ENCODE measurements at regions of chr3 and their contacts with region 1.

Region 1: DNA sequence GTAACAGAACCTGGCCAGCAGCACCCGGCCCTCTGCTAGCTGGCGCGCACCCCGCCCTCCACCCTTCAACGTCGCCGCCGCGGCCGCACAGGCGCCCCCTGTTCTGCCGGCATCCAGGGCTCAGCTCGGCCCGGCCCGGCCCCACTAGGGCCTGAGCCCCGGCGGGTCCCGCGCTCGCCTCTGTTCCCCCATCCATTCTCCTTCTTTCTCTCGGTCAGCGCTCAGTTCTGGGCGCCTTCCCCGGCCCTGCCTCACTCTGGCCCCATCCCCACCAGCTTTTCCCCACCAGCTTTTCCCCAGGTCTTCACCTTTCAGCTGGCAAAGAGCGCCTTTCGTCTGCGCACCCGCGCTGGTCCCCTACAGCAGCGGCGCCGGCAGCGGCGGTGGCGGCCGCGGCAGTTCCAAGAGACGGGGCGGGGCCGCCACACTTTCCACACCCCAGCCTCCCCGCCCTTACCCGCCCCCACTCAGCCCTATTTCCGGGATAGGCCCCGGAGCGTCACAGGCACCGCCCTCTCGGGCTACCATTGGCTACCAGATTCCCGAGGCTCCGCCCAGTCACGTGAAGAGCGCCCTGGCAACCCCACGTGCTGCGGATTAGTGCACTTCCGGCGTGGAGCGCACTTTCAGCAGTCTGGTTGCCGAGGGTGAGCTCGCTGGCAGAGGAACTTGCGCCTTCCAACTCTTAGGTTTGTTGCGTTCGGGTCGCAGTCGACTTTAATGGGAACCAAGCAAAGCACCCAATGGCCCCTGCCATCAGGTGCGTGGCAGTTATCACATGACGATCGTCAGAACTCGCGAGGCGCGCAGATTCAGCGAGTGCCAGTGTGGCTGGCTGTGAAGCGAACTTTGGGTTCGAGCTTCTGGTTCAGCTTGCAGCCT is at the start of gene EIF5A2:
- DNase-seq: peak; percentile 89 to 98 (median 95)
- ATAC-seq: peak; percentile 96
- H3K4me3 ChIP-seq: peak within 1 kb of the TSS; percentile 66 to 68
- H3K4me3 Mint-ChIP-seq: peak within 1 kb of the TSS; percentile 95
- H3K27ac ChIP-seq: peak within 1 kb of the TSS; percentile 67 to 79
- H3K27ac Mint-ChIP-seq: peak within 1 kb of the TSS; percentile 97
- H3K4me1 ChIP-seq: peaks cover 12% of the 10 kb centered on the region
- H3K4me1 Mint-ChIP-seq: peaks cover 20% of the 10 kb centered on the region
- H3K27me3 ChIP-seq: no peaks in the 10 kb centered on the region
- H3K27me3 Mint-ChIP-seq: no peaks in the 10 kb centered on the region
- CTCF ChIP-seq: no peak
- total RNA-seq, gene EIF5A2: 10.6 to 12.7 TPM

Region 2: GRCh38 chr3:170357176-170357919 is 551.1 kb before region 1 on chr3 and contains the start of gene SKIL:
- CTCF ChIA-PET with region 1: no interaction called
- POLR2A ChIA-PET with region 1: no interaction called
- intact Hi-C with region 1: loop called in 1 of 2 experiments (anchors 10 kb)
- DNase-seq: peak; percentile 94 to 99 (median 97)
- ATAC-seq: peak; percentile 69
- H3K4me3 ChIP-seq: peak within 1 kb of the TSS; percentile 55 to 76
- H3K4me3 Mint-ChIP-seq: peak within 1 kb of the TSS; percentile 95
- H3K27ac ChIP-seq: peak within 1 kb of the TSS; percentile 91 to 96
- H3K27ac Mint-ChIP-seq: peak within 1 kb of the TSS; percentile 99
- H3K4me1 ChIP-seq: peaks cover 24% of the 10 kb centered on the region
- H3K4me1 Mint-ChIP-seq: peaks cover 52% of the 10 kb centered on the region
- H3K27me3 ChIP-seq: no peaks in the 10 kb centered on the region
- H3K27me3 Mint-ChIP-seq: no peaks in the 10 kb centered on the region
- CTCF ChIP-seq: no peak
- total RNA-seq, gene SKIL: 160 to 177 TPM

Region 3: GRCh38 chr3:170869645-170870593 is 38.6 kb before region 1 on chr3 and contains the start of gene RPL22L1:
- CTCF ChIA-PET with region 1: interaction called, 7 read pairs
- POLR2A ChIA-PET with region 1: interaction called, 37 read pairs
- intact Hi-C with region 1: loop called (anchors 1 kb)
- DNase-seq: peak; percentile 85 to 97 (median 93)
- ATAC-seq: peak; percentile 93
- H3K4me3 ChIP-seq: peak within 1 kb of the TSS; percentile 73 to 77
- H3K4me3 Mint-ChIP-seq: peak within 1 kb of the TSS; percentile 94
- H3K27ac ChIP-seq: peak within 1 kb of the TSS; percentile 84 to 94
- H3K27ac Mint-ChIP-seq: peak within 1 kb of the TSS; percentile 97
- H3K4me1 ChIP-seq: peaks cover 27% of the 10 kb centered on the region
- H3K4me1 Mint-ChIP-seq: peaks cover 28% of the 10 kb centered on the region
- H3K27me3 ChIP-seq: no peaks in the 10 kb centered on the region
- H3K27me3 Mint-ChIP-seq: no peaks in the 10 kb centered on the region
- CTCF ChIP-seq: no peak
- total RNA-seq, gene RPL22L1: 54.3 to 56.8 TPM

Region 4: GRCh38 chr3:171028025-171028778 is 119.7 kb after region 1 on chr3:
- CTCF ChIA-PET with region 1: no interaction called
- POLR2A ChIA-PET with region 1: no interaction called
- intact Hi-C with region 1: loop called in 1 of 2 experiments (anchors 1 kb)
- DNase-seq: peak in 5 of 9 experiments; percentile 5 to 49 (median 23)
- ATAC-seq: peak; percentile 40
- H3K4me3 ChIP-seq: peak overlapping the region; percentile 10 to 39
- H3K4me3 Mint-ChIP-seq: no peak overlapping the region
- H3K27ac ChIP-seq: no peak overlapping the region
- H3K27ac Mint-ChIP-seq: no peak overlapping the region
- H3K4me1 ChIP-seq: no peaks in the 10 kb centered on the region
- H3K4me1 Mint-ChIP-seq: no peaks in the 10 kb centered on the region
- H3K27me3 ChIP-seq: peaks cover 0 to 2% of the 10 kb centered on the region in 2 experiments
- H3K27me3 Mint-ChIP-seq: peaks cover 15% of the 10 kb centered on the region
- CTCF ChIP-seq: no peak

Region 5: DNA sequence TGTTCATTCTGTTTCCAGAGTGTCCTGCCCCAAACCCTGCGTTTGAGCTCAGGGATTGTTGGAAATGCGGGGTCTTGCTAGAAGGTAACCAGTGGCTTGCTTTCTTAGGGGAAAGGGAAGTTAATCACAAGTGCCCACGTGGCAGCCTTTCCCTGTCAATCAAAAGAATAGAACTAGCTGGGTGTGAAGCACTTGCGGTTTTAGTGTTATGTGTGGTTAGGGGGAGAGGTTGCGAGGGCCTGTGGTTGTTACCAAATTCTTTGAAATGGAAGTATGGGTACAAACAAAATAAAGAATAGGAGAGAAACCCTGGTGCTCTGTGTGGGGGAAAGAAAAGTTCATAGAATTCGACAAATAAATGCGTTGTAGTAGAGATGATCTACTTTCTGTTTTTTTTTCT is 1198.5 kb after region 1 on chr3:
- CTCF ChIA-PET with region 1: no interaction called
- POLR2A ChIA-PET with region 1: no interaction called
- intact Hi-C with region 1: loop called in 1 of 2 experiments (anchors 5 kb)
- DNase-seq: peak; percentile 35 to 93 (median 59)
- ATAC-seq: peak; percentile 56
- H3K4me3 ChIP-seq: peak overlapping the region; percentile 25 to 28
- H3K4me3 Mint-ChIP-seq: peak overlapping the region; percentile 70
- H3K27ac ChIP-seq: peak overlapping the region; percentile 41 to 72
- H3K27ac Mint-ChIP-seq: peak overlapping the region; percentile 85
- H3K4me1 ChIP-seq: peaks cover 74% of the 10 kb centered on the region
- H3K4me1 Mint-ChIP-seq: peaks cover 81% of the 10 kb centered on the region
- H3K27me3 ChIP-seq: no peaks in the 10 kb centered on the region
- H3K27me3 Mint-ChIP-seq: no peaks in the 10 kb centered on the region
- CTCF ChIP-seq: no peak

Measured in CD8-positive, alpha-beta T cell (primary cell).